ENCODE measurements at regions of chr2 and their contacts with region 1.

Region 1: GRCh38 chr2:209663150-209663549 is 108.5 kb upstream of the UNC80 start:
- DNase-seq: no peak
- ATAC-seq: peak; percentile 35; the same call in 1 of the 3 replicates
- H3K4me3 ChIP-seq: no peak overlapping the region
- H3K27ac ChIP-seq: no peak overlapping the region
- H3K4me1 ChIP-seq: no peaks in the 10 kb centered on the region
- H3K27me3 ChIP-seq: no peaks in the 10 kb centered on the region; a peak in 1 of 5 replicates
- CTCF ChIP-seq: no peak
- EP300 ChIP-seq: no peak
- POLR2A ChIP-seq: no peak
- RAD21 ChIP-seq: no peak

Region 2: DNA sequence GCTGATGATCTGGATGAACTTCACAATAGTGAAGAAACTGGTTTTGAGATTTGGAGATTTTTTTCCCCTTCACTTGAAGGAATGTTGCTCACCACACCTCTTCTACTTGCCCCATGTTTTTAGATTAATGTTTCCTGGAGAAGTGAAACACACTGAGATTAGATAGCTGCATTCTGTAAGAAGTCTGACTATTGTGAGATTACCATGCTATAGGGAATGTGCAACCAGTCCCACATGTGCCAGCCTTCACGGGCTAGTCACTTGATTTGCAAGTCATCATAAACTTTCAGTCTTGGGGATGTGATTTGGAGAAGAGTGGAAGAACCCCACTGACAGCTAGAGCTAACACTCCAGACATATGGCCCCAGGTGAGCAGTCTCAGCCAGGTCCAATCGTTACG is 1959.1 kb before region 1 on chr2:
- CTCF ChIA-PET with region 1: no interaction called
- POLR2A ChIA-PET with region 1: no interaction called
- in situ Hi-C with region 1: no loop called
- intact Hi-C with region 1: loop called (anchors 5 kb)
- DNase-seq: no peak
- ATAC-seq: no peak
- H3K4me3 ChIP-seq: no peak overlapping the region
- H3K27ac ChIP-seq: no peak overlapping the region
- H3K4me1 ChIP-seq: peaks cover 43% of the 10 kb centered on the region
- H3K27me3 ChIP-seq: no peaks in the 10 kb centered on the region
- CTCF ChIP-seq: no peak
- EP300 ChIP-seq: no peak
- POLR2A ChIP-seq: no peak
- RAD21 ChIP-seq: no peak

Measured in HepG2 (cell line).